ENCODE measurements at regions of chr19 and their contacts with region 1.

Region 1: GRCh38 chr19:4916292-4917082 is 7.2 kb downstream of the UHRF1 start:
- DNase-seq: no peak
- H3K4me3 ChIP-seq: no peak overlapping the region
- H3K4me3 Mint-ChIP-seq: no peak overlapping the region
- H3K27ac Mint-ChIP-seq: no peak overlapping the region
- H3K4me1 ChIP-seq: no peaks in the 10 kb centered on the region
- H3K4me1 Mint-ChIP-seq: peaks cover 7% of the 10 kb centered on the region
- H3K27me3 ChIP-seq: no peaks in the 10 kb centered on the region; the same call in 1 of the 2 replicates
- H3K27me3 Mint-ChIP-seq: no peaks in the 10 kb centered on the region
- CTCF ChIP-seq: no peak

Region 2: GRCh38 chr19:4744451-4745174 is 171.9 kb before region 1 on chr19:
- CTCF ChIA-PET with region 1: no interaction called
- POLR2A ChIA-PET with region 1: no interaction called
- intact Hi-C with region 1: no loop called
- DNase-seq: no peak
- H3K4me3 ChIP-seq: no peak overlapping the region
- H3K4me3 Mint-ChIP-seq: no peak overlapping the region
- H3K27ac Mint-ChIP-seq: no peak overlapping the region
- H3K4me1 ChIP-seq: no peaks in the 10 kb centered on the region
- H3K4me1 Mint-ChIP-seq: no peaks in the 10 kb centered on the region
- H3K27me3 ChIP-seq: no peaks in the 10 kb centered on the region
- H3K27me3 Mint-ChIP-seq: peaks cover 24% of the 10 kb centered on the region
- CTCF ChIP-seq: no peak

Region 3: GRCh38 chr19:4803736-4804695 is 112.5 kb before region 1 on chr19:
- CTCF ChIA-PET with region 1: no interaction called
- POLR2A ChIA-PET with region 1: no interaction called
- intact Hi-C with region 1: no loop called
- DNase-seq: peak; percentile 69 to 84
- H3K4me3 ChIP-seq: no peak overlapping the region
- H3K4me3 Mint-ChIP-seq: no peak overlapping the region
- H3K27ac Mint-ChIP-seq: no peak overlapping the region
- H3K4me1 ChIP-seq: peaks cover 6% of the 10 kb centered on the region; the same call in 1 of the 2 replicates
- H3K4me1 Mint-ChIP-seq: no peaks in the 10 kb centered on the region
- H3K27me3 ChIP-seq: no peaks in the 10 kb centered on the region
- H3K27me3 Mint-ChIP-seq: no peaks in the 10 kb centered on the region
- CTCF ChIP-seq: peak; percentile 91 to 92

Region 4: DNA sequence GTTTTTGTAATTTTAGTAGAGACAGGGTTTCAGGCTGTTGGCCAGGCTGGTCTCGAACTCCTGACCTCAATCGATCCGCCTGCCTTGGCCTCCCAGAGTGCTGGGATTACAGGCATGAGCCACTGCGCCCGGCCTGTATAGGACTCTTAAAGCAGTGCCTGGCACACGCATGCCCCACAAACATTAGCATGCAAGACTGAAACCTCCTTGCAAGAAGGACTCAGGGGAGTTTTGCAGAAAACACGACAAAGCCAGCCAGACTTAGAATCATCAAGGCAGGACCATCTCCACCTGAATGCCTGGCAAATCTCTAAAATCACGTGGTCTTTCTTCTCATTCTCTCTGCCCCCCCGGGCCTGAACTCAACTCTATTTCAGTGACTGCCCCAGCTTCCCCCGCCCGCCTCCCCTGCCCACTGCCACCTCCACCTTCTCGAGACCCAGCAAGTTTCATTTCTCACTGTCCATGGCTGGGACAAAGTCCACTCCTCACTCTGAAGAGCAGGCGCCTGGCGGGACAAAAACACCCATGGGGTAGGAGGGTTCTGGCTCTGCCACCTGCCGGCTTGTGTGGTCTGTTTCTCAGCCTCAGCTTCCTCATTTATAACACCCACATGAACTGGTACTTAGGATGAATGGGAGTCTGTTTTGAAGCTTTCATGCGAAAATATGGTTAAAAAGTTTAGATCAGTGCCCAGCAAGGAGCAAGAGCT is 87.3 kb before region 1 on chr19:
- CTCF ChIA-PET with region 1: no interaction called
- POLR2A ChIA-PET with region 1: no interaction called
- intact Hi-C with region 1: no loop called
- DNase-seq: no peak
- H3K4me3 ChIP-seq: no peak overlapping the region
- H3K4me3 Mint-ChIP-seq: no peak overlapping the region
- H3K27ac Mint-ChIP-seq: no peak overlapping the region
- H3K4me1 ChIP-seq: peaks cover 6% of the 10 kb centered on the region; the same call in 1 of the 2 replicates
- H3K4me1 Mint-ChIP-seq: peaks cover 10% of the 10 kb centered on the region
- H3K27me3 ChIP-seq: no peaks in the 10 kb centered on the region
- H3K27me3 Mint-ChIP-seq: no peaks in the 10 kb centered on the region
- CTCF ChIP-seq: no peak

Region 5: GRCh38 chr19:4878491-4878968 is 38.0 kb before region 1 on chr19:
- CTCF ChIA-PET with region 1: no interaction called
- POLR2A ChIA-PET with region 1: no interaction called
- intact Hi-C with region 1: no loop called
- DNase-seq: no peak
- H3K4me3 ChIP-seq: no peak overlapping the region
- H3K4me3 Mint-ChIP-seq: no peak overlapping the region
- H3K27ac Mint-ChIP-seq: no peak overlapping the region
- H3K4me1 ChIP-seq: no peaks in the 10 kb centered on the region
- H3K4me1 Mint-ChIP-seq: no peaks in the 10 kb centered on the region
- H3K27me3 ChIP-seq: no peaks in the 10 kb centered on the region
- H3K27me3 Mint-ChIP-seq: no peaks in the 10 kb centered on the region
- CTCF ChIP-seq: no peak

Region 6: DNA sequence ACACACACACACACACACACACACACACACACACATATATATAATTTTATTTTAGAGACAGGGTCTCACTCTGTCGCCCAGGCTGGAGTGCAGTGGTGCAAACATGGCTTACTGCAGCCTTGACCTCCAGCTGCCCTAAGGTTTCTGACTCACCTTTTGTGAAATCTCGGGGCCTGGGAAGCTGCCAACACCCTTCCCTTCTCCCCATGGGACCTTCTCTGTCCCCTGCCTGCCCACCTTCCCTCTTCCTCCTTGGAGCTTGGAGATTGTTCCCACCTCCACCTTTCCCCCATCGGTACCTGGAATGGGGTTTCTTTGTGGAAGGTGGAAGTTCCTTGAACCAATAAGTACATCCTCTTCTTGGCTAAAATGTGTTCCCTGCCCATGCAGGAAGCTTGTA is 20.1 kb before region 1 on chr19:
- CTCF ChIA-PET with region 1: no interaction called
- POLR2A ChIA-PET with region 1: interaction called, 10 read pairs
- intact Hi-C with region 1: no loop called
- DNase-seq: no peak
- H3K4me3 ChIP-seq: no peak overlapping the region
- H3K4me3 Mint-ChIP-seq: no peak overlapping the region
- H3K27ac Mint-ChIP-seq: no peak overlapping the region
- H3K4me1 ChIP-seq: no peaks in the 10 kb centered on the region
- H3K4me1 Mint-ChIP-seq: no peaks in the 10 kb centered on the region
- H3K27me3 ChIP-seq: no peaks in the 10 kb centered on the region
- H3K27me3 Mint-ChIP-seq: no peaks in the 10 kb centered on the region
- CTCF ChIP-seq: no peak